CD4-positive, alpha-beta memory T cell (primary cell): ENCODE measurements at regions of chr14 and their contacts with region 1.

Region 1: GRCh38 chr14:73026845-73027542 is at the start of gene ZFYVE1:
- DNase-seq: peak; percentile 86 to 94 (median 89)
- H3K4me3 ChIP-seq: peak within 1 kb of the TSS; percentile 47 to 88
- H3K4me3 Mint-ChIP-seq: peak within 1 kb of the TSS; percentile 97 to 99 (median 98)
- H3K27ac ChIP-seq: peak within 1 kb of the TSS; percentile 69
- H3K27ac Mint-ChIP-seq: peak within 1 kb of the TSS; percentile 69 to 98 (median 95)
- H3K4me1 ChIP-seq: peaks cover 27% of the 10 kb centered on the region
- H3K4me1 Mint-ChIP-seq: peaks cover 30 to 47% (median 38%) of the 10 kb centered on the region in 4 donors
- H3K27me3 ChIP-seq: no peaks in the 10 kb centered on the region
- H3K27me3 Mint-ChIP-seq: no peaks in the 10 kb centered on the region
- total RNA-seq, gene ZFYVE1: 18.7 to 21.5 TPM

Region 2: DNA sequence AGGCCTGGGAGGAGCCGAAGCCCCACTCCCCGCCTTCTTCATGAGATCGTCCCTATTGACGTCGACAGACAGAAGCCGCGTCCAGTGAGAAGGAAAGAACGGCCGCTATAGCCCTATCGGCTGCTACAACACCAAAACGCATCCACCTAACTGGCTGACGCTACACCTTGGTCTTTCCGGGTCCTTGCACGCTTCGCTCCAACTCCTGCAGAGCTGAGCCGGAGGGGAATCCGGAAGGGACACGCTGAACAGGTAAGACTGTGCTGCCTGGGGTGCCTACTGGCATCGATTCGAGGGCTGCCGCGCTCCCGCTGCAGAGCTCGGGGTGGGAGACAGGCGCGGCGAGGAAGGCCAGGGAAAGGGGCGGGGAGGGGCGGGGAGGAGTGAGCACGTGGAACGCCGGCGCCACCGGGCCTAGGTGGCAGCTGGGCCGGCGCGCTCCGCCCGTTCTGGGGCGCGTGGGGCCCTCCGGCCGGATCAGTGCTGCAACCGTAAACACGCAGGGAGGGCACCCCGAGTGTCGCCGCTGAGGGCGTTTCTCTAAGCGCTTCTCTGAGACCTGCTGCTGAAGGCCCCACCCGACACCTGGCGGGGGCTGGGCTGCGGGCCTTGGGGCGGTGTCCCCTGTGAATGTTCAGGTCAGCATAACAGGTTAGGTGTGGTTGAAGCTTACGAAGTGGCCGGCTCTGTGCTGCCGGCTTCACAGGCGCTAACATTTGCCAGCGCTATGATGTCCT is 100.5 kb before region 1 on chr14 and contains the start of gene DCAF4:
- CTCF ChIA-PET with region 1: no interaction called
- POLR2A ChIA-PET with region 1: no interaction called
- intact Hi-C with region 1: loop called (anchors 10 kb)
- DNase-seq: peak; percentile 90 to 98 (median 93)
- H3K4me3 ChIP-seq: peak within 1 kb of the TSS; percentile 73 to 82
- H3K4me3 Mint-ChIP-seq: peak within 1 kb of the TSS; percentile 91 to 99 (median 93)
- H3K27ac ChIP-seq: peak within 1 kb of the TSS; percentile 66
- H3K27ac Mint-ChIP-seq: peak within 1 kb of the TSS; percentile 93 to 97 (median 95)
- H3K4me1 ChIP-seq: peaks cover 12% of the 10 kb centered on the region
- H3K4me1 Mint-ChIP-seq: peaks cover 7 to 20% (median 13%) of the 10 kb centered on the region in 4 donors
- H3K27me3 ChIP-seq: no peaks in the 10 kb centered on the region
- H3K27me3 Mint-ChIP-seq: peaks cover 0 to 2% of the 10 kb centered on the region in 2 donors
- total RNA-seq, gene DCAF4: 25.2 to 26.9 TPM

Region 3: DNA sequence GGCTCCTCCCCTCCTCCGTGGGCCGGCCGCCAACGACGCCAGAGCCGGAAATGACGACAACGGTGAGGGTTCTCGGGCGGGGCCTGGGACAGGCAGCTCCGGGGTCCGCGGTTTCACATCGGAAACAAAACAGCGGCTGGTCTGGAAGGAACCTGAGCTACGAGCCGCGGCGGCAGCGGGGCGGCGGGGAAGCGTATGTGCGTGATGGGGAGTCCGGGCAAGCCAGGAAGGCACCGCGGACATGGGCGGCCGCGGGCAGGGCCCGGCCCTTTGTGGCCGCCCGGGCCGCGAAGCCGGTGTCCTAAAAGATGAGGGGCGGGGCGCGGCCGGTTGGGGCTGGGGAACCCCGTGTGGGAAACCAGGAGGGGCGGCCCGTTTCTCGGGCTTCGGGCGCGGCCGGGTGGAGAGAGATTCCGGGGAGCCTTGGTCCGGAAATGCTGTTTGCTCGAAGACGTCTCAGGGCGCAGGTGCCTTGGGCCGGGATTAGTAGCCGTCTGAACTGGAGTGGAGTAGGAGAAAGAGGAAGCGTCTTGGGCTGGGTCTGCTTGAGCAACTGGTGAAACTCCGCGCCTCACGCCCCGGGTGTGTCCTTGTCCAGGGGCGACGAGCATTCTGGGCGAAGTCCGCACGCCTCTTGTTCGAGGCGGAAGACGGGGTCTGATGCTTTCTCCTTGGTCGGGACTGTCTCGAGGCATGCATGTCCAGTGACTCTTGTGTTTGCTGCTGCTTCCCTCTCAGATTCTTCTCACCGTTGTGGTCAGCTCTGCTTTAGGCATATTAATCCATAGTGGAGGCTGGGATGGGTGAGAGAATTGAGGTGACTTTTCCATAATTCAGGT is 109.6 kb after region 1 on chr14 and contains the start of gene PSEN1:
- CTCF ChIA-PET with region 1: interaction called, 4 read pairs
- POLR2A ChIA-PET with region 1: interaction called, 6 read pairs
- intact Hi-C with region 1: loop called (anchors 1 kb)
- DNase-seq: peak; percentile 97 to 100 (median 98)
- H3K4me3 ChIP-seq: peak within 1 kb of the TSS; percentile 58 to 96
- H3K4me3 Mint-ChIP-seq: peak within 1 kb of the TSS; percentile 89 to 98 (median 96)
- H3K27ac ChIP-seq: peak within 1 kb of the TSS; percentile 90
- H3K27ac Mint-ChIP-seq: peak within 1 kb of the TSS; percentile 93 to 100 (median 99)
- H3K4me1 ChIP-seq: peaks cover 24% of the 10 kb centered on the region
- H3K4me1 Mint-ChIP-seq: peaks cover 24 to 44% (median 28%) of the 10 kb centered on the region in 4 donors
- H3K27me3 ChIP-seq: no peaks in the 10 kb centered on the region
- H3K27me3 Mint-ChIP-seq: no peaks in the 10 kb centered on the region
- total RNA-seq, gene PSEN1: 47.4 to 51.7 TPM

Region 4: GRCh38 chr14:73458151-73458976 is 431.4 kb after region 1 on chr14 and contains the start of gene NUMB:
- CTCF ChIA-PET with region 1: no interaction called
- POLR2A ChIA-PET with region 1: no interaction called
- intact Hi-C with region 1: loop called (anchors 1 kb)
- DNase-seq: peak; percentile 97 to 99 (median 98)
- H3K4me3 ChIP-seq: peak within 1 kb of the TSS; percentile 58 to 75
- H3K4me3 Mint-ChIP-seq: peak within 1 kb of the TSS; percentile 95 to 100 (median 98)
- H3K27ac ChIP-seq: peak within 1 kb of the TSS; percentile 86
- H3K27ac Mint-ChIP-seq: peak within 1 kb of the TSS; percentile 77 to 99 (median 97)
- H3K4me1 ChIP-seq: peaks cover 41% of the 10 kb centered on the region
- H3K4me1 Mint-ChIP-seq: peaks cover 25 to 46% (median 34%) of the 10 kb centered on the region in 4 donors
- H3K27me3 ChIP-seq: no peaks in the 10 kb centered on the region
- H3K27me3 Mint-ChIP-seq: no peaks in the 10 kb centered on the region
- total RNA-seq, gene NUMB: 45.3 to 47.3 TPM

Region 5: DNA sequence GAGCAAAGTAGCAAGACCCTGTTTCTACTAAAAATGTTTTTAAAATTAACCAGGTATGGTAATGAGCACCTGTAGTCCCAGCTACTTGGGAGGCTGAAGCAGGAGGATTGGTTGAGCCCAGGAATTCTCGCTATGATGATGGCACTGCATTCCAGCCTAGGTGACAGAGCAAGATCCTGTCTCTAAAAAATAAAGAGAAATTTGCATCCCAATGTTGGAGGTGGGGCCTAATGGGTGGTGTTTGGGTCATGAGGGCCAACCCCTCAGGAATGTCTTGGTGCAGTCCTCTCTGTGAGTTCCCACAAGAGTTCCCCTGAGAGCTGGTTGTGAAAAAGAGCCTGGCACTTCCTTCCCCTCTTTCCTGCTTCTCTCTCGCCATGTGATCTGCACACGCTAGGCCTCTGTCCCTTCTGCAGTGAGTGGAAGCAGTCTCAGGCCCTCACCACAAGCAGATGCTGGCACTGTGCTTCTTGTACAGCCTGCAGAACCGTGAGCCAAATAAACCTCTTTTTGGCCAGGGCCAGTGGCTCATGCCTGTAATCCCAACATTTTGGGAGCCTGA is 596.6 kb after region 1 on chr14:
- CTCF ChIA-PET with region 1: no interaction called
- POLR2A ChIA-PET with region 1: no interaction called
- intact Hi-C with region 1: no loop called
- DNase-seq: no peak
- H3K4me3 ChIP-seq: no peak overlapping the region
- H3K4me3 Mint-ChIP-seq: no peak overlapping the region
- H3K27ac ChIP-seq: no peak overlapping the region
- H3K27ac Mint-ChIP-seq: peak overlapping the region in 1 of 7 donors; percentile 42
- H3K4me1 ChIP-seq: no peaks in the 10 kb centered on the region
- H3K4me1 Mint-ChIP-seq: no peaks in the 10 kb centered on the region
- H3K27me3 ChIP-seq: no peaks in the 10 kb centered on the region
- H3K27me3 Mint-ChIP-seq: no peaks in the 10 kb centered on the region